Kidney (tissue), 22 donors: ENCODE measurements at regions of chr5 and their contacts with region 1.

Region 1: GRCh38 chr5:126438267-126438666 is 15.1 kb downstream of the GRAMD2B start:
- DNase-seq: no peak
- H3K4me3 ChIP-seq: no peak overlapping the region
- H3K27ac ChIP-seq: no peak overlapping the region
- H3K4me1 ChIP-seq: no peaks in the 10 kb centered on the region
- H3K27me3 ChIP-seq: no peaks in the 10 kb centered on the region
- CTCF ChIP-seq: no peak

Region 2: GRCh38 chr5:126483156-126483555 is 44.9 kb after region 1 on chr5:
- intact Hi-C with region 1: loop called (anchors 10 kb)
- DNase-seq: peak in 1 of 5 donors; percentile 42
- H3K4me3 ChIP-seq: no peak overlapping the region
- H3K27ac ChIP-seq: no peak overlapping the region
- H3K4me1 ChIP-seq: peaks cover 0 to 2% (median 0%) of the 10 kb centered on the region in 3 donors
- H3K27me3 ChIP-seq: no peaks in the 10 kb centered on the region
- CTCF ChIP-seq: no peak